ENCODE measurements at regions of chr11 and their contacts with region 1.

Region 1: GRCh38 chr11:69718147-69718546 is 14.3 kb upstream of the FGF19 start:
- DNase-seq: no peak
- ATAC-seq: peak; percentile 70
- H3K4me3 ChIP-seq: no peak overlapping the region
- H3K27ac ChIP-seq: no peak overlapping the region
- H3K4me1 ChIP-seq: no peaks in the 10 kb centered on the region
- H3K27me3 ChIP-seq: peaks cover 16% of the 10 kb centered on the region; the same call in 1 of the 2 replicates
- CTCF ChIP-seq: peak; percentile 79

Region 2: DNA sequence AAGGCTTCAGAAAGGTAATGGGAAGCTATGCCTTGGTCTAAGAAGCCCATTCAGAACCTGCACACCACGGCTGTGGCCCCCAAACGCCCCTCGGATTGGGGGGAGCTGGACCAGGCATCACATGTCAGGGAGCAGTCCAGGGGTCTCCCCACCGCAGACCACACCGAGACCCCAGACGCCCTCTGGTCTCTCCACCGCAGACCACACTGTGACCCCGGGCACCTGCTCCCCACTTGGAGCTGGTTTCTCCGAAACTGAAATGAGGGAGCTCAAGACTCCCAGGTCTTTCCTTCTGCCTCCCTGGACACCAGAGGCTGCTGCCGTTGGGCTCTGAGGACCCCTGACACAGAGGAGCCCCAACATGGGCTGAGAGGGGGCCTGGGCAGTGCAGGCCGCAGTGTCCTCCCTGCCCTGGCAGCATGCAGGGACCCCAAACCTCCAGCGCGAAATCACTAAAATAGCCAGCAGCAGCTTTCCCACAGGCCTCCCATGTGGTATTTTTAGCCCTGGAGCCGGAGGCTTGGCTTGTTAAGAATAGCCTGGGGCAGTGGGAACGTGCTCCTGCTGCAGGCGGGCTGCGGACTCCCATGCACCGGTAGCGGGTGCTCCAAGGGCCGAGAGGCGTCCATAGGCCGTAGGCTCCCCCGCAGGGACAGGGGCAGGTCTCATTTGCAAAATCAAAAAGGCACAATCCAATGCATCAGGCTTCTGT is 229.0 kb before region 1 on chr11:
- CTCF ChIA-PET with region 1: no interaction called
- POLR2A ChIA-PET with region 1: no interaction called
- in situ Hi-C with region 1: no loop called
- intact Hi-C with region 1: no loop called
- DNase-seq: no peak
- ATAC-seq: no peak
- H3K4me3 ChIP-seq: no peak overlapping the region
- H3K27ac ChIP-seq: no peak overlapping the region
- H3K4me1 ChIP-seq: peaks cover 9% of the 10 kb centered on the region; the same call in 1 of the 2 replicates
- H3K27me3 ChIP-seq: no peaks in the 10 kb centered on the region
- CTCF ChIP-seq: no peak

Region 3: DNA sequence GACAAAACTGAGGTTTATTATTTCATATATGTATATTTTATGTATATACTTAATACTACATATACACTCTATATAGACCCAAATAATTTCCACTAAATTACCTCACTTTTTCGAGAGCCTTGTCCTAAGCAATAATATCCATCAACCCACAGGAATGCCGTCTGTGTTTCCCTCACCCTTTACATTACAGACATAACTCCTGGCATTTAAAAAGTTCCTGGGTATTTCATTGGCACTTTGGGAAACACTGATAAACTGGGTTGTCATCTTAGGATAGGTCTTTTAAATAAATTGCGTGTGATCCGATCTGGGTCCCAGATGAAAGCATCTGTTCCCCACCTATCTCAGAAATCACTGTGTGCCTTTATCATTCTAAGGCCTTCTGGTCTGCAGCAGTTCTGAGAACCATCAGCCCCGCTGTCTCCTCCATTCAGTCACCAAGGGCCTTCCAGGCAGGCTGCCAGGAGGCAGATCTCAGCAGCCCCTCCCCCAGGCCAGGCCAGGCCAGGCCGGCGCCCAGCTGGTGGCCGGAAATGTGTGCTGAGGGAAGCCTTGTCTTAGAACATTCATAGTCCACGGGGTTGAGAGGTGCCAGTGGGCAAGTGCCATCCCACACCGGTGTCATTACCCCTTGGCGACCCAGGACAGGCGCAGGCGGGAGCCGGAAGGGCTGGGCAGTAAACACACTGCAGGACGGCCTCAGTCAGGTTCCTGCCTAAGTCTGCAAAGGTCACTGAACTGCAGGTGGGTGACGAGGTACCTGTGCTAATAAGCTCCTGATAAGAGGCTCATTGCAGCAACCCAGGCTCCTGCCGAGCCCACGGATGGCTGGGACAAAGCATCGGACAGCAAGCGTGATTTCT is 17.6 kb before region 1 on chr11:
- CTCF ChIA-PET with region 1: no interaction called
- POLR2A ChIA-PET with region 1: no interaction called
- in situ Hi-C with region 1: no loop called
- intact Hi-C with region 1: no loop called
- DNase-seq: no peak
- ATAC-seq: peak; percentile 50; the same call in 1 of the 2 replicates
- H3K4me3 ChIP-seq: no peak overlapping the region
- H3K27ac ChIP-seq: no peak overlapping the region
- H3K4me1 ChIP-seq: peaks cover 7% of the 10 kb centered on the region
- H3K27me3 ChIP-seq: peaks cover 3% of the 10 kb centered on the region; the same call in 1 of the 2 replicates
- CTCF ChIP-seq: no peak

Region 4: GRCh38 chr11:69746752-69747742 is 28.9 kb after region 1 on chr11:
- CTCF ChIA-PET with region 1: interaction called, 10 read pairs
- POLR2A ChIA-PET with region 1: no interaction called
- in situ Hi-C with region 1: no loop called
- intact Hi-C with region 1: no loop called
- DNase-seq: no peak
- ATAC-seq: no peak
- H3K4me3 ChIP-seq: no peak overlapping the region
- H3K27ac ChIP-seq: no peak overlapping the region
- H3K4me1 ChIP-seq: no peaks in the 10 kb centered on the region
- H3K27me3 ChIP-seq: no peaks in the 10 kb centered on the region
- CTCF ChIP-seq: no peak